Right lobe of liver (tissue), 6 donors: ENCODE measurements at regions of chr11 and their contacts with region 1.

Region 1: GRCh38 chr11:19441752-19442553 is 201.2 kb upstream of the E2F8 start:
- DNase-seq: peak in 1 of 3 donors; percentile 61
- ATAC-seq: peak in 2 of 4 donors; percentile 7 to 87
- H3K4me3 ChIP-seq: no peak overlapping the region
- H3K27ac ChIP-seq: no peak overlapping the region
- H3K4me1 ChIP-seq: peaks cover 0 to 12% (median 6%) of the 10 kb centered on the region in 4 donors
- H3K27me3 ChIP-seq: no peaks in the 10 kb centered on the region
- CTCF ChIP-seq: no peak
- POLR2A ChIP-seq: no peak

Region 2: GRCh38 chr11:19370100-19370861 is 71.7 kb before region 1 on chr11:
- intact Hi-C with region 1: no loop called
- DNase-seq: no peak
- ATAC-seq: peak; percentile 45 to 75 (median 58)
- H3K4me3 ChIP-seq: no peak overlapping the region
- H3K27ac ChIP-seq: no peak overlapping the region
- H3K4me1 ChIP-seq: peaks cover 0 to 16% (median 4%) of the 10 kb centered on the region in 4 donors
- H3K27me3 ChIP-seq: no peaks in the 10 kb centered on the region
- CTCF ChIP-seq: no peak
- POLR2A ChIP-seq: no peak

Region 3: DNA sequence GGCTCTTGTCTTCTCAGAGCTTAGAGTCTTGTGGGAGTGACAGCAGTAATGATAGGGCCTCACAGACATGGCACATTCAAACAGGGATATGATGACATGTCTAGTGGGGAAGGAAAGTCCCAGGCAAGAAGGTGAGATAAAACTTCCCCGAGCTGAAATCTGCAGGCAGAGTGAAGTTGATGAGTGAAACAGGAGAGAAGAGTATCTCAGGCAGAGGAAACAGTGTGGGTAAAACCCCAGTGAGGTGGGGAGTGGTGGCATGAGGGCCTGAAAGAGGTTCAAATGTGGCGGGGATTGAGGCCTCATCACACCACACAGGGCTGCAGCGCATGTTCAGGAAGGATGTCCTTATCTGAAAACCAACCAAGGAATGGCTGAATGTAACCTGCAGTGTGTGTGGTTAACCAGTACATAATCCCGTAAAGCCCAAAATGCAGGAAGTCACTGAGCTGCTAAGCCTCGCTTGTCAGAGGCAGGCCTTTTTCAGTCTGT is 47.4 kb before region 1 on chr11:
- intact Hi-C with region 1: no loop called
- DNase-seq: no peak
- ATAC-seq: no peak
- H3K4me3 ChIP-seq: no peak overlapping the region
- H3K27ac ChIP-seq: no peak overlapping the region
- H3K4me1 ChIP-seq: peaks cover 0 to 28% (median 14%) of the 10 kb centered on the region in 4 donors
- H3K27me3 ChIP-seq: no peaks in the 10 kb centered on the region
- CTCF ChIP-seq: no peak
- POLR2A ChIP-seq: no peak

Region 4: DNA sequence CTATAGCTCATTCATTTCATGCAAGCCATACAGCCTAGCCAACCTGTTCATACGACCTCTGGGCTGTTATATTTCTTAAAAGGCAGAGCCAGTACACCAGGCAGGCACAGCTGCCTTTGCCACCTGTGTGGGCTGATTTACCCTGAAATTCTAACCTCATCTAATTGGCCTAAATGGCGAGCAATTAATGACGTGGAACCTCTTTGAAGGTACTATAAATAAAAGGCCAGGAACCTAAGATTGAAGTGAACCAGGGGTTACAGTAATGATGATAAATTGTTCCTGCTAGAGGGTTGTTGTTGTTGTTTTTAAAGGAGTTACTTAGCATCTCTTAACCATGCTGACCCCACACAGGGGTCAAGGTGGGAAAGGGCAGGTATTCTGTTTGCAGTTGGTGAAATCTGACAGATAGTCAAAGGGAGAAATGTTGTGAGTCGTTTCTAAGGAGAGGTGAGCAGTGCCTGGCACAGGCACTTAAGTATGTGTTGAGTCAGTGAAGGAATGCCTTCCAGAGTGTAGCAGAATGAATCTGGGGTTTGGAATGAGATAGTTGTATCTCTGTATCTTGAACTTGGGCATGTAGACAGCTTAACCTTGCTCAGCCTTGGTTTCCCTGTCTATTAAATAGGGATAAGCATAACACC is 57.2 kb after region 1 on chr11:
- intact Hi-C with region 1: no loop called
- DNase-seq: no peak
- ATAC-seq: no peak
- H3K4me3 ChIP-seq: no peak overlapping the region
- H3K27ac ChIP-seq: no peak overlapping the region
- H3K4me1 ChIP-seq: peaks cover 0 to 17% (median 6%) of the 10 kb centered on the region in 4 donors
- H3K27me3 ChIP-seq: no peaks in the 10 kb centered on the region
- CTCF ChIP-seq: no peak
- POLR2A ChIP-seq: no peak

Region 5: GRCh38 chr11:19511413-19512183 is 69.6 kb after region 1 on chr11:
- intact Hi-C with region 1: loop called in 1 of 2 experiments (anchors 10 kb)
- DNase-seq: peak; percentile 86 to 96 (median 93)
- ATAC-seq: peak; percentile 72 to 86 (median 80)
- H3K4me3 ChIP-seq: peak overlapping the region in 2 of 3 donors; percentile 17 to 35
- H3K27ac ChIP-seq: peak overlapping the region; percentile 38 to 82 (median 79)
- H3K4me1 ChIP-seq: peaks cover 0 to 57% (median 25%) of the 10 kb centered on the region in 4 donors
- H3K27me3 ChIP-seq: no peaks in the 10 kb centered on the region
- CTCF ChIP-seq: no peak
- POLR2A ChIP-seq: peak; percentile 45